GM12878 (cell line): ENCODE measurements at regions of chr16 and their contacts with region 1.

Region 1: GRCh38 chr16:78659216-78659942 is 559.9 kb downstream of the WWOX start:
- DNase-seq: no peak
- ATAC-seq: no peak
- H3K4me3 ChIP-seq: no peak overlapping the region
- H3K27ac ChIP-seq: no peak overlapping the region
- H3K4me1 ChIP-seq: no peaks in the 10 kb centered on the region
- H3K27me3 ChIP-seq: no peaks in the 10 kb centered on the region
- CTCF ChIP-seq: no peak
- EP300 ChIP-seq: no peak
- POLR2A ChIP-seq: no peak
- RAD21 ChIP-seq: no peak

Region 2: GRCh38 chr16:78718141-78718540 is 58.8 kb after region 1 on chr16:
- CTCF ChIA-PET with region 1: no interaction called
- POLR2A ChIA-PET with region 1: no interaction called
- RAD21 ChIA-PET with region 1: no interaction called
- SMC1A ChIA-PET with region 1: no interaction called
- in situ Hi-C with region 1: loop called (anchors 10 kb)
- intact Hi-C with region 1: no loop called
- DNase-seq: no peak
- ATAC-seq: no peak
- H3K4me3 ChIP-seq: no peak overlapping the region
- H3K27ac ChIP-seq: no peak overlapping the region
- H3K4me1 ChIP-seq: no peaks in the 10 kb centered on the region
- H3K27me3 ChIP-seq: no peaks in the 10 kb centered on the region
- CTCF ChIP-seq: no peak
- EP300 ChIP-seq: no peak
- POLR2A ChIP-seq: no peak
- RAD21 ChIP-seq: no peak

Region 3: DNA sequence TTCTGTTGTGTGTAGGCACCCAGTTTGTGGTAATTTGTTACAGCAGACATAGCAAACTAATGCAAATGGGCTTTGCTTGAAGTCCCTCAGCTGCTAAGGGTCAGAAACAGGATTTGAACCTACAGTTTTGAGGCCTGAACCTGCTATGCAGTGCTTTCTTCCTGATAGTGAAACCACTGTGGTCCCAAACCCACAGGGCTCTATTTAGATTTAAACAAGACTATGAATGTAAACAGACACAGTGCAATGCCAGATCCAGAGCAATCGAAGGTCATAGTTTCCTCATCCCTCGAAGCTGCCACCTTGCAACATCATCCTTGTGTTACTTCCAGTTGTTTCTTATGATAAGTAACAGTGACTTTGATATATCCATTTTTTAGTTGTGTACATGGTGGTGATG is 70.3 kb after region 1 on chr16:
- CTCF ChIA-PET with region 1: no interaction called
- POLR2A ChIA-PET with region 1: no interaction called
- RAD21 ChIA-PET with region 1: no interaction called
- SMC1A ChIA-PET with region 1: no interaction called
- in situ Hi-C with region 1: no loop called
- intact Hi-C with region 1: no loop called
- DNase-seq: peak; percentile 23
- ATAC-seq: peak; percentile 40
- H3K4me3 ChIP-seq: no peak overlapping the region
- H3K27ac ChIP-seq: no peak overlapping the region
- H3K4me1 ChIP-seq: no peaks in the 10 kb centered on the region
- H3K27me3 ChIP-seq: no peaks in the 10 kb centered on the region
- CTCF ChIP-seq: no peak
- EP300 ChIP-seq: no peak
- POLR2A ChIP-seq: no peak
- RAD21 ChIP-seq: no peak